ENCODE measurements at regions of chr5 and their contacts with region 1.

Region 1: GRCh38 chr5:127757576-127757975 is 54.4 kb downstream of the CCDC192 start:
- DNase-seq: peak; percentile 62 to 69
- H3K4me3 ChIP-seq: no peak overlapping the region
- H3K4me3 Mint-ChIP-seq: peak overlapping the region; percentile 24
- H3K27ac Mint-ChIP-seq: peak overlapping the region; percentile 27
- H3K4me1 ChIP-seq: peaks cover 48% of the 10 kb centered on the region
- H3K4me1 Mint-ChIP-seq: peaks cover 50% of the 10 kb centered on the region
- H3K27me3 ChIP-seq: no peaks in the 10 kb centered on the region
- H3K27me3 Mint-ChIP-seq: no peaks in the 10 kb centered on the region
- CTCF ChIP-seq: peak; percentile 53

Region 2: DNA sequence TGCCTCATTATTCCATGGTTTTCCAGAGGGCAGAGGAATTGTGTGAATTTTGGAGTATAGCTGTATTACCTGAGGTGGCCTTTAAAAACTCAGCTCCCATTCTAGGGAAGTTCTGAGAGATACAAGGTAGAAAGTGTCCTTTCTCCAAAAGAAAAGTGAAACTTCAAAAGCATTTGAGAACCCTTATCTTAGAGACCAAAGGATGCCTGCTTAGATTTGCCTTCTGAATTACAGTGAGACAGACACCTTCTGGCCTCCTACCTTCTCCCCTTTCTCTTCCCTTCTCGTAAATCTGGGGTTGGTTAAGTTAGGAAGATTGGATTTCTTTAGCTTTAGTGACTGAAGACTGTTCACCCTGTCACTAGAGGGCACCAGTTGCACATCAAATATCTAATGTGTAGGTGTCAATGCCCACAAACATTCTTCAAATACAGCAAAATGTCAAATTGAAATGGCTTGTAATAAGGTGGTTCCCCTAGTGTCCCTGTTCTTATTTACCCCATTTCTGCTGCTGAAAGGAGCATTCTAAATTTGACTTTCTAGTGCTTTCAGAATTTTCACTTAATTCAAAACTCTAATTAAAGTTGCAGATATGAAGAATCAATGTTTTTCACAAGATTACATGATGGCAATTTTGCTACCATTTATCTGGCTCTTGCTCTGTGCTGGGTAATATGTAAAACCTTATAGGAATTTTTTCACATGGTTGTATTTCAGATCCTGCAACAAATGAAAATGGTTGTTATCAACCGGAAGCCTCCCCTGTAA is 193.4 kb before region 1 on chr5:
- CTCF ChIA-PET with region 1: interaction called, 6 read pairs
- POLR2A ChIA-PET with region 1: no interaction called
- intact Hi-C with region 1: loop called (anchors 1 kb)
- DNase-seq: peak; percentile 53 to 71
- H3K4me3 ChIP-seq: no peak overlapping the region
- H3K4me3 Mint-ChIP-seq: no peak overlapping the region
- H3K27ac Mint-ChIP-seq: no peak overlapping the region
- H3K4me1 ChIP-seq: no peaks in the 10 kb centered on the region
- H3K4me1 Mint-ChIP-seq: no peaks in the 10 kb centered on the region
- H3K27me3 ChIP-seq: no peaks in the 10 kb centered on the region
- H3K27me3 Mint-ChIP-seq: no peaks in the 10 kb centered on the region
- CTCF ChIP-seq: peak; percentile 60 to 80

Region 3: DNA sequence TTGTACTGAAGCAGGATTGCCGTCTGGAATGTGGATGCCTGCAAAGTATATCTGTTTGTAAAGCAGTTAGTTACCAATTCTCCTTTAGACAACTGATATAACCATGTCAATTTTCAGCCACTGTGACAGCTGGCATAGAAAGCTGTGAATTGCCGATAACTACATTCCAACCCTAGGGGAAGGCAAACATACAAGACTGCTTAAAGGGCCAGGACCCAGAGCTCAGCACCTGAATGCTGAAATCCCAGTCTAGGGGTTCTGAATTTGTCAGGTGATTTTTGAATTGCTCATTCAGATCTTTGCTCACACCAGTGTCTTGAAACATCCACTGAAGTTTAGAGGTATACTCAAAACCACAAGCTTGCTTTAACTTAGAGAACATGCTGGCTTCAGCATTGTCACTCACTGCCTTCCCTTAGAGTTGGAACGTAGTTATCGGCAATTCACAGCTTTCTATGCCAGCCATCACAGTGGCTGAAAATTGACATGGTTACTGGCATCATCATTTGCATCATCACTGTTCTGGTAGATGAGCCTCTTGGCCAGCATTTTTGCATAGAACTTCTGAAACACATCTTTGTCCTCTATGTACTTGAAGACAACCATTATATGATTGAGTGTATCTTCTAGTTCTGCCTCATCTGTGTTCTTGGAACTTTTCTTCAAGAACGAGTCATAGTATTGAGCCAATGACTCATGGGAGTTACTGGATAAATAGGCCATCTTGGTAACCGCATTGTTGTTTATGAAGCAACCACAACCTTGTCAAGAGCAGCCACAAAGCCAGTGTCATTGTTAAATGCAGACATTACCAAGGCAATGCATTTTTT is 27.7 kb after region 1 on chr5:
- CTCF ChIA-PET with region 1: no interaction called
- POLR2A ChIA-PET with region 1: no interaction called
- intact Hi-C with region 1: loop called (anchors 2 kb)
- DNase-seq: peak; percentile 36 to 37
- H3K4me3 ChIP-seq: no peak overlapping the region
- H3K4me3 Mint-ChIP-seq: no peak overlapping the region
- H3K27ac Mint-ChIP-seq: peak overlapping the region; percentile 60
- H3K4me1 ChIP-seq: peaks cover 16% of the 10 kb centered on the region
- H3K4me1 Mint-ChIP-seq: peaks cover 15% of the 10 kb centered on the region
- H3K27me3 ChIP-seq: no peaks in the 10 kb centered on the region
- H3K27me3 Mint-ChIP-seq: no peaks in the 10 kb centered on the region
- CTCF ChIP-seq: no peak

Region 4: DNA sequence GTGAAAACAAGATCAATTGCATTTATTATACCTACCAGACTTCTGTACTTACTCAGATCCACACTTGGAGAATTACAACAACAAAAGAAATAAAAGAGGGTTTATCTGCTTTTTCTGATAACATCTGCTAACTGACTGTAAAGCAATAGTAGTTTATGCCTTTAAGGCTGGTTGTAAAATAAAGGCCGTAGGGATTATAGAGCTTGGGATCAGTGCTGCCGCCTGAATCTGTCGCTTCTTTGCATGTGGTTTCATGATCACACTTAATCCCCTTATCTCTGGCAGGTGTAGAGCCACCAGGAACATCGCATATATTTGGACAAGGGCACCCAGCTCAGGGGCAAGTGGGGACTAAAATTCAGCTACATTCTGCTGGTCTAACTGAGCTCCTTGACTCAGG is 92.3 kb after region 1 on chr5:
- CTCF ChIA-PET with region 1: no interaction called
- POLR2A ChIA-PET with region 1: interaction called, 3 read pairs
- intact Hi-C with region 1: loop called (anchors 1 kb)
- DNase-seq: peak; percentile 84 to 88
- H3K4me3 ChIP-seq: no peak overlapping the region
- H3K4me3 Mint-ChIP-seq: no peak overlapping the region
- H3K27ac Mint-ChIP-seq: peak overlapping the region; percentile 57
- H3K4me1 ChIP-seq: peaks cover 26% of the 10 kb centered on the region
- H3K4me1 Mint-ChIP-seq: peaks cover 21% of the 10 kb centered on the region
- H3K27me3 ChIP-seq: no peaks in the 10 kb centered on the region
- H3K27me3 Mint-ChIP-seq: no peaks in the 10 kb centered on the region
- CTCF ChIP-seq: no peak

Region 5: DNA sequence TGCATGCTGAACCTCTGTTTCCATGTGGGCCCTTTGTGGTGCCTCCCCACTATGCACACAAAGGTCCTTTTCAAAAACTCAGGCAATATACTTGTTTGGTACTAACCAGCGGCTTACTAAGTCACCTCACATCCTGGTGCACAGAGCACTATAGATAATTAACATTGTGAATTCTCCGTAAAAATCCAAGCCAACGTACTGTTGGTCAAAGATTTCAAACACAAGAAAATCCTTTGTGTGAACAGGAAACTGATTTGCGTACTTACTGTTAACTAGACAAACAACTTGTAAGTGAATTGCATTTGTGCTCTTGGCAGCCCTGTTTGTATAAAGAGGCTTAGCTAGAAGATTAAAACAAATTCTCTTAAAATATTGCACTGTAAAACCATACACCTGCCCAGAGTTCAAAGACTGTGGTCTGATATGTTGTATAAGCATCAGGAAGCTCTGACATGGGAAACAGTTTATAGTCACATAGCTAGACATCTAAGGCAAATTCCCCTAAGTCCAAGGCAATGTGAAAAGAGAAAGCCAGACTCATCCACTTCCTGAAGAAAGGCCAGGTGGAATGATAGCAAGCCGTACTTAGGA is 200.9 kb after region 1 on chr5:
- CTCF ChIA-PET with region 1: no interaction called
- POLR2A ChIA-PET with region 1: no interaction called
- intact Hi-C with region 1: loop called (anchors 1 kb)
- DNase-seq: peak; percentile 55 to 58
- H3K4me3 ChIP-seq: no peak overlapping the region
- H3K4me3 Mint-ChIP-seq: peak overlapping the region; percentile 37
- H3K27ac Mint-ChIP-seq: peak overlapping the region; percentile 65
- H3K4me1 ChIP-seq: peaks cover 19% of the 10 kb centered on the region
- H3K4me1 Mint-ChIP-seq: peaks cover 39% of the 10 kb centered on the region
- H3K27me3 ChIP-seq: no peaks in the 10 kb centered on the region
- H3K27me3 Mint-ChIP-seq: no peaks in the 10 kb centered on the region
- CTCF ChIP-seq: no peak

Region 6: GRCh38 chr5:128154943-128155342 is 397.4 kb after region 1 on chr5:
- CTCF ChIA-PET with region 1: interaction called, 3 read pairs
- POLR2A ChIA-PET with region 1: no interaction called
- intact Hi-C with region 1: loop called (anchors 5 kb)
- DNase-seq: no peak
- H3K4me3 ChIP-seq: no peak overlapping the region
- H3K4me3 Mint-ChIP-seq: no peak overlapping the region
- H3K27ac Mint-ChIP-seq: no peak overlapping the region
- H3K4me1 ChIP-seq: peaks cover 27% of the 10 kb centered on the region
- H3K4me1 Mint-ChIP-seq: peaks cover 2% of the 10 kb centered on the region
- H3K27me3 ChIP-seq: no peaks in the 10 kb centered on the region
- H3K27me3 Mint-ChIP-seq: no peaks in the 10 kb centered on the region
- CTCF ChIP-seq: no peak

Region 7: GRCh38 chr5:128674825-128675446 is 917.4 kb after region 1 on chr5:
- CTCF ChIA-PET with region 1: no interaction called
- POLR2A ChIA-PET with region 1: no interaction called
- intact Hi-C with region 1: loop called (anchors 10 kb)
- DNase-seq: peak; percentile 53 to 66
- H3K4me3 ChIP-seq: no peak overlapping the region
- H3K4me3 Mint-ChIP-seq: no peak overlapping the region
- H3K27ac Mint-ChIP-seq: no peak overlapping the region
- H3K4me1 ChIP-seq: no peaks in the 10 kb centered on the region
- H3K4me1 Mint-ChIP-seq: no peaks in the 10 kb centered on the region
- H3K27me3 ChIP-seq: no peaks in the 10 kb centered on the region
- H3K27me3 Mint-ChIP-seq: no peaks in the 10 kb centered on the region
- CTCF ChIP-seq: peak; percentile 58 to 68